ENCODE measurements at regions of chr16 and their contacts with region 1.

Region 1: DNA sequence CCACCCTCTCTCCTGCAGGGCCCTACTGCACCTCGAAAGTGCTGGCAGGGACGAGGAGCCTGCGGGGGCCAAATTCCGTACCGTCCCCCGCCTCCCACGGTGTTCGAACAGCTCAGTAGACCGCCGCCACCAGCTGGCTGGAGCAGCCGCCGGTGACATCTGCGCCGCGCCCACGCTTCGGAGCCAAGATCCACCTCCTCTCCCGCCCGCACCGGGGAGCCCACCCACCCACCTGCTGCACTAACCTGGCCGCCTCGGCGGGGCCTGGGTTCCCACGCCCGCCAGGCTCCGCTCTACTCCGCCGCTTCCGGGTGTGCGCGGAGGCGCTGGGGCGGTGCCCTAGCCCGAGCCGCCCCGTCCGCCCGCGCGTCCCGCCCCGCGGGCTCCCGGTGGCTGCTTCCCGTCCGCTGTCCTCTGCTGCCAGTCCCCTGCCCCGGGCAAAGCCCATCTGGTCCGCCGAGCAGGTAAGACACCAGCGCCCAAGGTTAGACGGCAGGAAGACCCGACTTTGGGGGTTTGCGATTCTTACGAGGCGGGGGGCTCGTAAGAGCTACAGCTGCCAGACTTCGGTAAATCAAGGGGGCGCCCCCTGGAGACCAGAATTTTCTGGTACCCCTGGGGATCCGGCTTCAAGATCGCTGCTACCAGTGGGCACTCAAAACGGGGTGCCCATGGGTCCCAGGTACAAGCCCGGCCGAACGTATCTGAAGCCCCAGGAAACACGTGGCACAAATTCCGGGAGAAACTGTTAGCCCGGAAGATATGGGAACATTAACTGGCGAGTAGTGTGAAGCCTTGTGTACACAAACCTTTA is at the starts of genes FBXL8 and TRADD:
- DNase-seq: peak; percentile 79 to 86
- ATAC-seq: peak; percentile 55 to 63 (median 58)
- H3K4me3 ChIP-seq: peak within 1 kb of the TSS; percentile 93
- H3K27ac ChIP-seq: peak within 1 kb of the TSS; percentile 93
- H3K4me1 ChIP-seq: peaks cover 42% of the 10 kb centered on the region
- H3K27me3 ChIP-seq: no peaks in the 10 kb centered on the region
- CTCF ChIP-seq: peak; percentile 21
- total RNA-seq, gene FBXL8: 4.5 to 8.6 (median 5.9) TPM
- total RNA-seq, gene TRADD: 3.9 to 6.7 (median 5.9) TPM

Region 2: DNA sequence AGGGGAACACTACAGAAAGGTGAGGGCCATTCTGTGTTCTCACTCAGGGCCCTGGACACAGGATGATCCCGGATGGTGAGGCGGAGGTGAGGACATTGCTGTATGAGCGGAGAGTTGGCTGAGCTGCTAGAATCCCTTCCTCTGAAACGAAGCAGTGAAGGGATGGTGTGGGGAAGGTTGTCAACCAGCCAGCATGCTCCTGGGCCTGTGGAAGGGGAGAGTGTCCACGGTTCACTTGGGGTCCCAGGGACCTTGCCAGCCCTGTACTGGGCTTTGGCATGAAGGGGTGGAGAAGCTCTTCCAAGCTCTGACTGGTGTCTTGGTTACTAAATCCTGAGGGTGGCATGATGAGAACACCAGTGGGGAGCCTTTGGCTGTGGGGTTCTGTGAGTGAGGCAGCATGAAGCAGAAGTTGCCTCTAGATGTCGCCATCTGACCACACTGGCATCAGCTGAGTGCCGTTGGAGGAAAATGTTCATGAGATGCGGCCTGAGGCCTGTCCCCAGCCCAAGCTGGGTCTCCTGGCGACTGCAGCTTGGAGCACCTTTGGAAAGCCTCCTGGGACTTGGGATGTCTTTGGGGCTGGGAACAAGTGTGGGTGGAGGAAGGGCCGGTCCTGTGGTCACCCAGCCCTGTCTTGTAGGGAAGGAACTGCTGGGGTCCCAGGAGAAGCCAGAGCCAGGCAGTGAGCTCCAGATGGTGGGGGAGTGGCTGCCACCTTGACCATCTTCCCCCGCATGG is 264.7 kb before region 1 on chr16:
- intact Hi-C with region 1: loop called in 1 of 2 experiments (anchors 5 kb)
- DNase-seq: peak; percentile 64 to 78
- ATAC-seq: peak; percentile 69 to 79 (median 76)
- H3K4me3 ChIP-seq: no peak overlapping the region
- H3K27ac ChIP-seq: peak overlapping the region; percentile 30
- H3K4me1 ChIP-seq: peaks cover 17% of the 10 kb centered on the region
- H3K27me3 ChIP-seq: no peaks in the 10 kb centered on the region
- CTCF ChIP-seq: peak; percentile 83

Region 3: GRCh38 chr16:66961065-66961744 is 198.6 kb before region 1 on chr16 and contains the start of gene CES3:
- intact Hi-C with region 1: loop called in 1 of 2 experiments (anchors 5 kb)
- DNase-seq: peak; percentile 53 to 72
- ATAC-seq: peak; percentile 69 to 83 (median 80)
- H3K4me3 ChIP-seq: no peak within 1 kb of the TSS
- H3K27ac ChIP-seq: no peak within 1 kb of the TSS
- H3K4me1 ChIP-seq: peaks cover 13% of the 10 kb centered on the region
- H3K27me3 ChIP-seq: no peaks in the 10 kb centered on the region
- CTCF ChIP-seq: peak; percentile 53
- total RNA-seq, gene CES3: 9.7 to 15.2 (median 13.5) TPM

Region 4: GRCh38 chr16:66977341-66978113 is 182.3 kb before region 1 on chr16:
- intact Hi-C with region 1: loop called (anchors 1 to 5 kb)
- DNase-seq: peak; percentile 92 to 94
- ATAC-seq: peak; percentile 93 to 98 (median 96)
- H3K4me3 ChIP-seq: no peak overlapping the region
- H3K27ac ChIP-seq: no peak overlapping the region
- H3K4me1 ChIP-seq: no peaks in the 10 kb centered on the region
- H3K27me3 ChIP-seq: no peaks in the 10 kb centered on the region
- CTCF ChIP-seq: peak; percentile 98

Region 5: GRCh38 chr16:67017810-67018488 is 141.9 kb before region 1 on chr16:
- intact Hi-C with region 1: loop called (anchors 1 to 5 kb)
- DNase-seq: peak; percentile 59 to 78
- ATAC-seq: peak; percentile 85 to 90 (median 87)
- H3K4me3 ChIP-seq: no peak overlapping the region
- H3K27ac ChIP-seq: no peak overlapping the region
- H3K4me1 ChIP-seq: peaks cover 9% of the 10 kb centered on the region
- H3K27me3 ChIP-seq: no peaks in the 10 kb centered on the region
- CTCF ChIP-seq: peak; percentile 67

Region 6: GRCh38 chr16:67115639-67116038 is 44.2 kb before region 1 on chr16:
- intact Hi-C with region 1: loop called in 1 of 2 experiments (anchors 5 kb)
- DNase-seq: no peak
- ATAC-seq: peak in 2 of 4 donors; percentile 46 to 47
- H3K4me3 ChIP-seq: no peak overlapping the region
- H3K27ac ChIP-seq: no peak overlapping the region
- H3K4me1 ChIP-seq: peaks cover 31% of the 10 kb centered on the region
- H3K27me3 ChIP-seq: no peaks in the 10 kb centered on the region
- CTCF ChIP-seq: no peak

Measured in psoas muscle (tissue), 8 donors.